ENCODE measurements at regions of chr5 and their contacts with region 1.

Region 1: GRCh38 chr5:69334793-69335268 is 2.2 kb upstream of the CCDC125 start:
- DNase-seq: peak; percentile 84 to 92 (median 89)
- ATAC-seq: peak; percentile 87 to 92 (median 88)
- H3K4me3 ChIP-seq: peak overlapping the region in 8 of 12 donors; percentile 5 to 26 (median 21)
- H3K27ac ChIP-seq: peak overlapping the region in 7 of 12 donors; percentile 30 to 60 (median 43)
- H3K4me1 ChIP-seq: peaks cover 0 to 25% (median 11%) of the 10 kb centered on the region in 12 donors
- H3K27me3 ChIP-seq: no peaks in the 10 kb centered on the region
- CTCF ChIP-seq: peak; percentile 63 to 90 (median 76)
- POLR2A ChIP-seq: no peak

Region 2: DNA sequence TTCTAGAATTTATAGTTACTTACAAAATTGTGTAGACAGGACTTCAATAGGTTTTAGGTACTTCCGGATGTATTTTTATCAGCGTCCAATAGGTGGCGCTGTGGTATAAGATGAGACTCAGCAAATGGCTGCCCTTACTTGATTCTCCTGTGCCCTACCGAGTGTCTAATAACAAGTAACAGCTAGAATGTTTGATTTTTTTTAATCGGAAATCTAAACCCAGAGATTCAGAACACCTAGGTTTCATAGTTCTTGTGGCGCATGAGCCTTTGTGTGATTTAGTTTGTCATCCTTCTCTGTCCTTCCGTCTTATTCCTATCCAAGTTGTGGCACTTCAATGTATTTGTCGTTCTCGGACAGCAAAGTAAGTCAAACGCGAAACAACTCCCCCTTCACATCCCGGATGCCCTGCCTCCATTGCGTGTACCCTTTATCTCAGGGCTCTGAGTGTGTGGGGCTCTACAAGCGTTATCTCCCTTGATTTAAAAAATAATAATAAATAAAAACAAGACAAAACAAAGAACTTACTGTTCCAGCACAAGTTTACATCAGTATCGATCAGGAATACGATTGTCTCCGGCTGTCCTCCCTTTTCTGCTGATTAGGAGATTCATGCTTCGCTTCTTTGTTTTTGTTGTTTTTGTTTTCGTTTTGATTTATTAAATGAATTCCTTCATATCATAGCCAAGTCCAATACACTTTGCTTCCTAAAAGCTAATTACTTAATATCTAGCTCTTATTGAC is 291.7 kb before region 1 on chr5:
- intact Hi-C with region 1: loop called (anchors 2 to 10 kb)
- DNase-seq: peak in 4 of 5 donors; percentile 49 to 78 (median 66)
- ATAC-seq: peak; percentile 93 to 96 (median 95)
- H3K4me3 ChIP-seq: peak overlapping the region; percentile 24 to 67 (median 52)
- H3K27ac ChIP-seq: peak overlapping the region; percentile 51 to 84 (median 74)
- H3K4me1 ChIP-seq: peaks cover 0 to 6% (median 0%) of the 10 kb centered on the region in 12 donors
- H3K27me3 ChIP-seq: no peaks in the 10 kb centered on the region
- CTCF ChIP-seq: peak; percentile 81 to 96 (median 90)
- POLR2A ChIP-seq: no peak

Region 3: DNA sequence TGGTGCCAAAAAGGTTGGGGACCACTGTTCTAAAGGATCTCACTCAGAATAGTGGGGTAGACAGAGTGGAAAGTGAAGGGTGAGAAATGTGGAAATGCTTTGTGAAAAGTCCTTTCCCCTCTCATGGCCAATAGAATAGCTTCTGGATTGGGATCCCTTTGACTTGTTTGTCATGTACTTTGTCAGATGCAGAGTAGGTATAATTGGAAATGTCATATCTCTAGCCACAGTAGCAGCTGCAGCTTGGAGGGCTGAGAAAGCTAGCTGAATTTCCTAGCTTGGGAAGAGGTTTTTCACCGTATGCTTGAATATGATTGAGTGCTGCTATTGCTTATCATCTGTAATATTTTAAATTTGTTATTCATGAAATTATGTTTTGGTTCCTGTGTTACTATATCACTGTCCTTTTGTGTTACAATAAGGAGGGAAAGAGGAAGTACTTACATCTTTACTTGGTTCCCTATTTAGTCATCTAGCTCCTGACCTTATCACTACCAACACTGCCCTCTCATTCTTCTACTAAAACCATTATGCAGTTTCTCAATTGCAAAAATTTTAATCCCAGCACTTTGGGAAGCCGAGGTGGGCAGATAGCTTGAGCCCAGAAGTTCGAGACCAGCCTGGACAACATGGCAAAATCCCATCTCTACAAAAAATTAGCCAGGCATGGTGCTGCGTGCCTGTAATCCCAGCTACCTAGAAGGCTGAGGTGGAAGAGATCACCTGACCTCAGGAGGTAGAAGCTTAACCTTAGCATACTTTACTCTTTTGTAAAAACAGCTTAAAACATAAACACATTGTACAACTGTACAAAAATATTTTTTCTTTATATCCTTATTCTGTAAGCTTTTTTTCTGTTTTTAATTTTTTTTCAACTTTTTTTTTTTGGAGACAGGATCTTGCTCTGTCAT is 228.6 kb before region 1 on chr5:
- intact Hi-C with region 1: loop called in 1 of 10 experiments (anchors 10 kb)
- DNase-seq: no peak
- ATAC-seq: no peak
- H3K4me3 ChIP-seq: no peak overlapping the region
- H3K27ac ChIP-seq: no peak overlapping the region
- H3K4me1 ChIP-seq: no peaks in the 10 kb centered on the region
- H3K27me3 ChIP-seq: no peaks in the 10 kb centered on the region
- CTCF ChIP-seq: no peak
- POLR2A ChIP-seq: no peak

Region 4: GRCh38 chr5:69189162-69190086 is 145.4 kb before region 1 on chr5 and contains the start of gene CENPH:
- intact Hi-C with region 1: loop called in 1 of 10 experiments (anchors 10 kb)
- DNase-seq: peak; percentile 87 to 91 (median 89)
- ATAC-seq: peak; percentile 97 to 100 (median 99)
- H3K4me3 ChIP-seq: peak within 1 kb of the TSS; percentile 58 to 95 (median 80)
- H3K27ac ChIP-seq: peak within 1 kb of the TSS in 11 of 12 donors; percentile 49 to 80 (median 68)
- H3K4me1 ChIP-seq: peaks cover 0 to 17% (median 10%) of the 10 kb centered on the region in 12 donors
- H3K27me3 ChIP-seq: no peaks in the 10 kb centered on the region
- CTCF ChIP-seq: no peak
- POLR2A ChIP-seq: peak in 1 of 2 donors; percentile 17
- total RNA-seq, gene CENPH: 1.1 to 6.9 (median 2.7) TPM

Region 5: GRCh38 chr5:69234457-69235268 is 100.2 kb before region 1 on chr5 and contains the start of gene CDK7:
- intact Hi-C with region 1: loop called in 2 of 10 experiments (anchors 5 kb)
- DNase-seq: peak; percentile 94 to 95 (median 95)
- ATAC-seq: peak; percentile 99 to 100 (median 100)
- H3K4me3 ChIP-seq: peak within 1 kb of the TSS; percentile 65 to 96 (median 88)
- H3K27ac ChIP-seq: peak within 1 kb of the TSS; percentile 35 to 91 (median 84)
- H3K4me1 ChIP-seq: peaks cover 3 to 27% (median 18%) of the 10 kb centered on the region in 12 donors
- H3K27me3 ChIP-seq: no peaks in the 10 kb centered on the region
- CTCF ChIP-seq: no peak
- POLR2A ChIP-seq: peak in 1 of 2 donors; percentile 65
- total RNA-seq, gene CDK7: 9.6 to 23.1 (median 14.5) TPM

Region 6: DNA sequence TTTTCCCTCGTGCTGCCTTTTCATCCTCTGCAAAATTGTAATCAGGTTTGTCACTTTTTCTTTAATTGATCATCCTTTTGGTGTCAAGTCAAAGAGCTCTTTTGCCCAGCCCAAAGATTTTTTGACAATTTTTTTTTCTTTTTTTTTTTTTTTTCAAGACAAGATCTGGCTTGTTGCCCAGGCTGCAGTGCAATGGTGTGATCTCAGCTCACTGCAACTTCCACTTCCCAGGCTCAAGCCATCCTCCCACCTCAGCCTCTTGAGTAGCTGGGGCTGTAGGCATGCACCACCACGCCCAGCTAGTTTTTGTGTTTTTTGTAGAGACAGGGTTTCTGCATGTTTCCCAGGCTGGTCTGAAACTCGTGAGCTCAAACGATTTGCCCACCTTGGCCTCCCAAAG is 63.5 kb before region 1 on chr5:
- intact Hi-C with region 1: loop called in 1 of 10 experiments (anchors 10 kb)
- DNase-seq: peak in 2 of 5 donors; percentile 27 to 30
- ATAC-seq: no peak
- H3K4me3 ChIP-seq: no peak overlapping the region
- H3K27ac ChIP-seq: no peak overlapping the region
- H3K4me1 ChIP-seq: peaks cover 0 to 16% (median 0%) of the 10 kb centered on the region in 12 donors
- H3K27me3 ChIP-seq: no peaks in the 10 kb centered on the region
- CTCF ChIP-seq: no peak
- POLR2A ChIP-seq: no peak